H1 (cell line): ENCODE measurements at regions of chr6 and their contacts with region 1.

Region 1: DNA sequence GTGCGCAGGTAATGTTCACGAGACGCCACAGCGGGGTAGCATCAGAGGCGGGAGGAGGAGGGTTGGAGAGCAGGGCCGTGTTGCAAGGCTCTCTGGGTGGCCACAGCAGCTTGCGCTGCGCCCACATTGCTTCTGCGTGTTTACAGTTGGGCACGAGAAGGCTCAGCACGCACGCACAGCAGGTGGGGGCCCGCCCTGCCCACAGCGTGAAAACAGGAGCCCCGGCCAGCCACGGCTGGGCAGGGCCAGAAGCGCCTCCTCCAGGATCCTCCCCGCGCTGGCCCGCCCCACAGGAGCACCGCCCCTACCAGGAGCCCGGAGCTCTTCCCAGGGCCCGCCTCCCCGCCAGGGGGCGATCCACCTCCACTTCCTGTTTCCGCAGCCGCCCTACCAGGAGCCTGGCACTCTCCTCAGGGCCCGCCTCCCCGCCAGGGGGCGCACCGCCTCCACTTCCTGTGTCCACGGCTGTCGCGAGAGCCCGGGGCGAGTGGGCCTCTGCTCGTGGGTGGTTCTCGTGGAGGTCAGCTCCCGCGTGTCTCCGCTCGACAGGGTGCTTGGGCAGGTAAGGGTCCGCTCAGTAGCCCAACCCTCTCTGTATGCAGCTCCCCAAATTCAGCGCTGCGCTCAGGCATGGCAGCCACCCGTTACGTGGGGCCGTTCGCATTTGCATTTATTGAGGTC is at the start of gene FAM50B:
- DNase-seq: peak; percentile 64 to 99
- H3K4me3 ChIP-seq: peak within 1 kb of the TSS; percentile 46 to 71 (median 60)
- H3K27ac ChIP-seq: no peak within 1 kb of the TSS
- H3K4me1 ChIP-seq: peaks cover 0 to 10% (median 4%) of the 10 kb centered on the region in 4 experiments; a peak in 5 of 7 replicates
- H3K27me3 ChIP-seq: 0 out of 7 replicates have a peak, but pooled peaks cover 0 to 2% (median 0%) of the 10 kb centered on the region in 4 experiments
- CTCF ChIP-seq: peak; percentile 91 to 99 (median 95)
- EP300 ChIP-seq: no peak
- POLR2A ChIP-seq: peak in 1 of 2 experiments; percentile 50; a peak in 1 of 3 replicates
- RAD21 ChIP-seq: peak; percentile 85 to 89
- total RNA-seq, gene FAM50B: 3.1 and 3.8 TPM in 2 replicates

Region 2: GRCh38 chr6:3759646-3760232 is 89.3 kb before region 1 on chr6:
- CTCF ChIA-PET with region 1: interaction called, 16 read pairs
- POLR2A ChIA-PET with region 1: no interaction called
- DNase-seq: no peak
- H3K4me3 ChIP-seq: no peak overlapping the region
- H3K27ac ChIP-seq: no peak overlapping the region
- H3K4me1 ChIP-seq: peaks cover 3 to 16% (median 7%) of the 10 kb centered on the region in 4 experiments; a peak in 6 of 7 replicates
- H3K27me3 ChIP-seq: no peaks in the 10 kb centered on the region; a peak in 2 of 7 replicates
- CTCF ChIP-seq: no peak
- EP300 ChIP-seq: no peak
- POLR2A ChIP-seq: no peak
- RAD21 ChIP-seq: no peak

Region 3: GRCh38 chr6:3835055-3835731 is 13.9 kb before region 1 on chr6:
- CTCF ChIA-PET with region 1: interaction called, 40 read pairs
- POLR2A ChIA-PET with region 1: interaction called, 4 read pairs
- DNase-seq: no peak
- H3K4me3 ChIP-seq: no peak overlapping the region
- H3K27ac ChIP-seq: no peak overlapping the region
- H3K4me1 ChIP-seq: no peaks in the 10 kb centered on the region
- H3K27me3 ChIP-seq: no peaks in the 10 kb centered on the region
- CTCF ChIP-seq: 0 out of 4 replicates have a peak, but pooled peaks of 1 of the 3 experiments have one; percentile 2
- EP300 ChIP-seq: no peak
- POLR2A ChIP-seq: no peak
- RAD21 ChIP-seq: peak; percentile 24 to 45; a peak in 3 of 4 replicates

Region 4: GRCh38 chr6:3887150-3887700 is 38.2 kb after region 1 on chr6:
- CTCF ChIA-PET with region 1: interaction called, 39 read pairs
- POLR2A ChIA-PET with region 1: interaction called, 3 read pairs
- DNase-seq: no peak
- H3K4me3 ChIP-seq: no peak overlapping the region
- H3K27ac ChIP-seq: no peak overlapping the region
- H3K4me1 ChIP-seq: peaks cover 0 to 2% (median 0%) of the 10 kb centered on the region in 4 experiments; a peak in 1 of 7 replicates
- H3K27me3 ChIP-seq: no peaks in the 10 kb centered on the region
- CTCF ChIP-seq: no peak
- EP300 ChIP-seq: no peak
- POLR2A ChIP-seq: no peak
- RAD21 ChIP-seq: peak; percentile 39 to 47

Region 5: DNA sequence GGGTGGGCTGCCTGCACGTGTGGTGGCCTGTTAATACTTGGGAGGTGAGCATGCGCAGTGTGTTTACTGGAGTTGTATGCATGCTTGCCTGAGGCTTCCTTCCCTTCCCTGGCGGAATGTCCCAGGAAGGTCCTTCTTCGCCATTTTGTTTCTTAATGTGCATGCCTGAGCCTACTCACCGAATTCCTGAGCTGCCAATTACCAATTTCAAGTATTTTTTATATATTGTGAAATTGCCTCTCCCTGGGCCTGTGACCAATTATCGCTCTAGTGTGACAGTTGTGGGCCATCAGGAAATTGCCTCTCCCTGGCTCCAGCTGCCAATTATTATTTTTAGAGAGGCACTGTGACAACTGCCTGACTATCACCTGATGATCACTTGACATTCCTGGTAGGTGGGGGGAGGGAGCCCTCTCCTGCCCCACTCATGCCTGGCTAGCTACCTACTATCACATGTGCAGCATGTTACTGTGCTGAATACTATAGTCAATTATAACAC is 70.1 kb after region 1 on chr6:
- CTCF ChIA-PET with region 1: interaction called, 15 read pairs
- POLR2A ChIA-PET with region 1: no interaction called
- DNase-seq: no peak
- H3K4me3 ChIP-seq: no peak overlapping the region
- H3K27ac ChIP-seq: no peak overlapping the region
- H3K4me1 ChIP-seq: peaks cover 0 to 4% (median 0%) of the 10 kb centered on the region in 4 experiments; a peak in 1 of 7 replicates
- H3K27me3 ChIP-seq: no peaks in the 10 kb centered on the region
- CTCF ChIP-seq: no peak
- EP300 ChIP-seq: no peak
- POLR2A ChIP-seq: no peak
- RAD21 ChIP-seq: no peak

Region 6: DNA sequence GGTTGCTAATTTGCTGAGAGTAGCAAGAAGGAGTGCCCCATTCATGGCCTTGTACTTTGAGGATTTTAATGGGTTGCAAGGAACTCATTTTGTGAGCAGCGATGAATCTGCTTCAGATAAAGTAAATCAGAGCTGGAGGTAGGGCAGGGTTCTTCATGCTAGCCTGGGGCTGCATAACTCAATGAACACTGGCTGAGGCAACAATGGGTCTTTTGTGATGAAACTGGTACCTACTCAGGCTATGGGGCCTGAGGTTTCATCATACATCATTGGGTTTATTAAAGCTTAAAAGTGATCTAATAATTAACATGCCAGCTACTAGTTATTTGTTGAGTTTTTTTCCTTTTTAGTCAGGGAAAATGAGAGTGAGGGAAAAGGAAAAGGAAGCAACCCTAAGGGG is 107.0 kb after region 1 on chr6:
- CTCF ChIA-PET with region 1: interaction called, 18 read pairs
- POLR2A ChIA-PET with region 1: no interaction called
- DNase-seq: no peak
- H3K4me3 ChIP-seq: no peak overlapping the region
- H3K27ac ChIP-seq: no peak overlapping the region
- H3K4me1 ChIP-seq: no peaks in the 10 kb centered on the region
- H3K27me3 ChIP-seq: no peaks in the 10 kb centered on the region
- CTCF ChIP-seq: no peak
- EP300 ChIP-seq: no peak
- POLR2A ChIP-seq: no peak
- RAD21 ChIP-seq: no peak